Activated T-helper 1 cell treated with anti-CD3 and anti-CD28 coated beads, Interleukin-12 subunit alpha, Interleukin-12 subunit beta, Interleukin-2, Interleukin-4 antibody, amounts not matched to agents 30 ng/mL and 10 ng/mL and 1 ng/mL, durations not matched to agents 14 hours and 24 hours and 36 hours (primary cell): ENCODE measurements at regions of chr10 and their contacts with region 1.

Region 1: GRCh38 chr10:98748298-98748697 is 301.6 kb upstream of the HPS1 start:
- DNase-seq: no peak
- H3K4me3 Mint-ChIP-seq: no peak overlapping the region
- H3K27ac Mint-ChIP-seq: no peak overlapping the region
- H3K4me1 Mint-ChIP-seq: no peaks in the 10 kb centered on the region
- H3K27me3 Mint-ChIP-seq: no peaks in the 10 kb centered on the region

Region 2: DNA sequence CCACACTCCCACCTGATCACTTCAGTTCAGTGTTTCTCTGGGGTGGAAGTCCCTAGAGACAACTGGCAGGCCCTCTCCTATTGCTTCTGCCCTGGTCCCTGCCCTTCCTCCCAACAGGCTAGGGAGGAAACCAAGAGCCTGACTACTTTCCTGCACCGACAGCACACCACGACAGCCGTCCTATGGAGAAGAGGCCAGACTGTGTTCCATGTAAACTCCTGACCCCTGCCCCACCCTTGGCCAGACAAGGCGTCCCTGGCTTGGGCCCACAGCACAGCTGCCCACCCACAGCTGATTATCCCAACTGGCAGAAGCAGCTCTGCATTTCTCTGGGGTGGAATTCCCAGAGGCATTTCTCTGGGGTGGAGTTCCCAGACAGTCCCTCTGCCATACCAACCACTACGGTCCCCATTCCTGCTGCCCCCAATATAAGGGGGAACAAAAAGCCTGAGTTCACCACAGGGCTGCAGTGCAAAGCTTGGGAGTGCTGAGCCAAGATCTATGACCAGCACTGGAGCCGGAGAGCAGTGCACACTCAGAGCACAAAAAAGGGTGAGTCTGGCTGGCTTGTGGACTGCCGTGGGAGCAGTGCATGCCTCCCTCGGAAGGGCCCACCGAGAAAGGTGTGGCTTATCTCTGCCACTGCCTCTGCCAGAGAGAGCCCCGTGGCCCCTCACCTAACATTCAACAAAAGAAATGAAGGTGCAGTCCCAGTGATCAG is 293.9 kb after region 1 on chr10:
- intact Hi-C with region 1: loop called (anchors 5 kb)
- DNase-seq: no peak
- H3K4me3 Mint-ChIP-seq: no peak overlapping the region
- H3K27ac Mint-ChIP-seq: no peak overlapping the region
- H3K4me1 Mint-ChIP-seq: no peaks in the 10 kb centered on the region
- H3K27me3 Mint-ChIP-seq: peaks cover 2% of the 10 kb centered on the region